ENCODE measurements at regions of chr6 and their contacts with region 1.

Region 1: GRCh38 chr6:39228992-39229767 is at the start of gene KCNK5:
- DNase-seq: peak; percentile 94
- ATAC-seq: peak; percentile 93
- H3K4me3 Mint-ChIP-seq: peak within 1 kb of the TSS; percentile 86
- H3K27ac Mint-ChIP-seq: peak within 1 kb of the TSS; percentile 86
- H3K4me1 Mint-ChIP-seq: peaks cover 36% of the 10 kb centered on the region
- H3K27me3 Mint-ChIP-seq: peaks cover 2% of the 10 kb centered on the region
- total RNA-seq, gene KCNK5: 12.7 to 15.8 TPM

Region 2: GRCh38 chr6:38305995-38306681 is 923.0 kb before region 1 on chr6:
- CTCF ChIA-PET with region 1: no interaction called
- POLR2A ChIA-PET with region 1: no interaction called
- intact Hi-C with region 1: no loop called
- DNase-seq: no peak
- ATAC-seq: no peak
- H3K4me3 Mint-ChIP-seq: no peak overlapping the region
- H3K27ac Mint-ChIP-seq: no peak overlapping the region
- H3K4me1 Mint-ChIP-seq: peaks cover 8% of the 10 kb centered on the region
- H3K27me3 Mint-ChIP-seq: no peaks in the 10 kb centered on the region

Region 3: DNA sequence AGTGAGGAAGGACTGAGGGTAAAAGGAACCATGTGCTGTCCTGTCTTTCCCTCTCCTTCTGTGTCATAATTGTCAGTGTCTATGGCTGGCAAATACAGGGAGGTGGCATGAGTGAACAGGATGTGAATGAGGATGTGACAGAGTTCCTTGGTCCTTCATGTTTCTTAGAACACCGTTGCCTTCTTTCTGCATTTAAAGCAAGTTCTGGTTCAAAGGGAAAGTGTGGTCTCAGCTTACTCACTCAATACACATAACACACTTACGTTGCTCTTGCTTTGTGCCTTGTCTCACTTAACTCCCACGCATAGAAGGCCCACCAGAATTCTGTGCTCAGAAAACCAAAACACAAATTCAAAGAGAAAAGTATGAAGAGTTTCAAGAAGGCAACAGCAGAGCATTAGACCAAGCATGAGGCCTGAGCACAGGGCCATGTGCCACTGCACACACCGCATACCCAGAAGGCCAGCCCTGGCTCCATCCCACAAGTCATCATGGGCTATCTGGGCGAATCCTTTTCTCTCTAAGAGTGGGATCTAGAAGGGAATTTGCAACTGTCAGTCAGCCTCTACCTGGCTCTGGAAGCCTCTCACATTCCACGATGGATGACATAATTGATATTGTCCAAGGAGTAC is 75.3 kb before region 1 on chr6:
- CTCF ChIA-PET with region 1: no interaction called
- POLR2A ChIA-PET with region 1: no interaction called
- intact Hi-C with region 1: loop called in 1 of 2 experiments (anchors 1 kb)
- DNase-seq: peak; percentile 63
- ATAC-seq: peak; percentile 94
- H3K4me3 Mint-ChIP-seq: no peak overlapping the region
- H3K27ac Mint-ChIP-seq: peak overlapping the region; percentile 84
- H3K4me1 Mint-ChIP-seq: peaks cover 52% of the 10 kb centered on the region
- H3K27me3 Mint-ChIP-seq: peaks cover 10% of the 10 kb centered on the region

Region 4: GRCh38 chr6:39263303-39264037 is 34.3 kb after region 1 on chr6:
- CTCF ChIA-PET with region 1: no interaction called
- POLR2A ChIA-PET with region 1: interaction called, 4 read pairs
- intact Hi-C with region 1: loop called (anchors 1 to 2 kb)
- DNase-seq: peak; percentile 46
- ATAC-seq: peak; percentile 94
- H3K4me3 Mint-ChIP-seq: no peak overlapping the region
- H3K27ac Mint-ChIP-seq: no peak overlapping the region
- H3K4me1 Mint-ChIP-seq: peaks cover 17% of the 10 kb centered on the region
- H3K27me3 Mint-ChIP-seq: peaks cover 14% of the 10 kb centered on the region

Region 5: GRCh38 chr6:39724787-39725631 is 495.8 kb after region 1 on chr6 and contains the start of gene KIF6:
- CTCF ChIA-PET with region 1: no interaction called
- POLR2A ChIA-PET with region 1: no interaction called
- intact Hi-C with region 1: loop called in 1 of 2 experiments (anchors 2 kb)
- DNase-seq: peak; percentile 92
- ATAC-seq: peak; percentile 100
- H3K4me3 Mint-ChIP-seq: peak within 1 kb of the TSS; percentile 90
- H3K27ac Mint-ChIP-seq: peak within 1 kb of the TSS; percentile 60
- H3K4me1 Mint-ChIP-seq: peaks cover 3% of the 10 kb centered on the region
- H3K27me3 Mint-ChIP-seq: peaks cover 5% of the 10 kb centered on the region
- total RNA-seq, gene KIF6: 0.43 to 0.49 TPM

Region 6: DNA sequence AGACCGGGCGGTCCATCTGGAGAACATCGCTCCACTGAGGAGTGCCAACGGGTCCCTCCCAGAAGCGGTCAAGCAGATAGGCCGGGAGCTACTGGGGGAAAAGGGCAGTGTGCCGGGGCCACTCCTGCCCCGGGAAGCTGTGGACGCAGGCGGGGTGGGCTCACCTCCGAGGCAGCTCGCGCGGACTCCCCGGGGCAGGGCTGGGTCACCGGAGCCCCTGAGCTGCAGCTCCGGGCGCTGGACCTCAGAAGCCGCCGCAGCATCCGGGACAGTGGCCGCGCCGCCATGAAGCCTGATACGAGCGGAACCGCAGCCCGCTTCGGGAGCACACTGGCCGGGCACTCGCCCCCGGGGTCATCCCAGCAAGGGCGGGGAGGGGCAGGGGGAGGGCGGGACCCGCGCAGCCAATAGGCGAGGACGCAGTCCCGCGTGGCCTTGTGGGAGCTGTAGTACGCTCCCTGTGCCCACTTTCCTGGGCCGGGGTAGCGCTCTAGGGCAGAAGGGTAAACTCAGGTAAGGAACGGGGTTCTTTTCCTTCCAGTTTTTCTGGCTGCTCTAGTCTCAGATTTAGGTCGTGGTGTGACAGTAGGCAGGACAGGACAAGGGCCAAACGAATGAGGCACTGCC is 705.1 kb after region 1 on chr6 and contains the start of gene MOCS1:
- CTCF ChIA-PET with region 1: no interaction called
- POLR2A ChIA-PET with region 1: no interaction called
- intact Hi-C with region 1: loop called in 1 of 2 experiments (anchors 5 kb)
- DNase-seq: peak; percentile 86
- ATAC-seq: peak; percentile 93
- H3K4me3 Mint-ChIP-seq: peak within 1 kb of the TSS; percentile 82
- H3K27ac Mint-ChIP-seq: peak within 1 kb of the TSS; percentile 86
- H3K4me1 Mint-ChIP-seq: peaks cover 23% of the 10 kb centered on the region
- H3K27me3 Mint-ChIP-seq: peaks cover 3% of the 10 kb centered on the region
- total RNA-seq, gene MOCS1: 6.2 to 6.4 TPM